ENCODE measurements at regions of chr3 and their contacts with region 1.

Region 1: GRCh38 chr3:48409291-48410201 is 20.3 kb downstream of the PLXNB1 start:
- DNase-seq: peak in 1 of 2 donors; percentile 3
- H3K4me3 ChIP-seq: no peak overlapping the region
- H3K27ac ChIP-seq: no peak overlapping the region
- H3K4me1 ChIP-seq: peaks cover 0 to 5% (median 0%) of the 10 kb centered on the region in 4 donors
- H3K27me3 ChIP-seq: no peaks in the 10 kb centered on the region
- CTCF ChIP-seq: no peak
- EP300 ChIP-seq: no peak
- POLR2A ChIP-seq: no peak

Region 2: GRCh38 chr3:47932421-47932820 is 477.1 kb before region 1 on chr3:
- intact Hi-C with region 1: no loop called
- DNase-seq: no peak
- H3K4me3 ChIP-seq: no peak overlapping the region
- H3K27ac ChIP-seq: no peak overlapping the region
- H3K4me1 ChIP-seq: no peaks in the 10 kb centered on the region
- H3K27me3 ChIP-seq: no peaks in the 10 kb centered on the region
- CTCF ChIP-seq: no peak
- EP300 ChIP-seq: no peak
- POLR2A ChIP-seq: no peak

Region 3: DNA sequence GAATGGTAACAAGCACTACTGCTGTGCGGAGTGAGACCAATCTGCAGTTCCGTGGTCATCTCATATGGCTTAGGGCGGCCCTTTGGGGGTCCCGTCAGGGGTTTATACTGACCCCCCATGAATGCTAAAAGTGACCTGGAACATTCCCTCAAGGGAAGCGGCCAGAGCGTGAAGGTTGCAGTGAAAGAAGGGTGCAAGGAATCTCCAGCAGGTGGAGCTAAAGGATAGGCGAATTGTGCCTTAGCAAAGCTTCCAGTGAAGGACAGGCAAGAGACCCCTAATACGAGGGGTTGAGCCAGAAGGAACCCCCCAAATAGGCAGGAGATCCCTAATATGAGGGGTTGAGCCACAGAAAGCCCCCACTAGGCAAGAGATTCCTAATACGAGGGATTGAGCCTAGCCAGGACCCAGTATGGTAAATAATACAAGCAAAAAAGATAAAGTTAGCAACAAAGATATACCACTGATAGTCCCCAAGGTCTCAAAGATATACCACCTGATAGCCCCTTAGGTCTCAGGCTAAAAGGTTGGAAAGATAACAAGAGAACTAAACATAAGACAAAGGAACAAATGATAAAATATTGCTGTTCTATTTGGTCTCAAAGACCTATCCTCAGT is 135.8 kb before region 1 on chr3:
- intact Hi-C with region 1: loop called (anchors 10 kb)
- DNase-seq: peak; percentile 57 to 89
- H3K4me3 ChIP-seq: no peak overlapping the region
- H3K27ac ChIP-seq: no peak overlapping the region
- H3K4me1 ChIP-seq: peaks cover 0 to 11% (median 5%) of the 10 kb centered on the region in 4 donors
- H3K27me3 ChIP-seq: no peaks in the 10 kb centered on the region
- CTCF ChIP-seq: peak in 5 of 7 experiments; percentile 66 to 85 (median 72)
- EP300 ChIP-seq: no peak
- POLR2A ChIP-seq: no peak